ENCODE measurements at regions of chr5 and their contacts with region 1.

Region 1: DNA sequence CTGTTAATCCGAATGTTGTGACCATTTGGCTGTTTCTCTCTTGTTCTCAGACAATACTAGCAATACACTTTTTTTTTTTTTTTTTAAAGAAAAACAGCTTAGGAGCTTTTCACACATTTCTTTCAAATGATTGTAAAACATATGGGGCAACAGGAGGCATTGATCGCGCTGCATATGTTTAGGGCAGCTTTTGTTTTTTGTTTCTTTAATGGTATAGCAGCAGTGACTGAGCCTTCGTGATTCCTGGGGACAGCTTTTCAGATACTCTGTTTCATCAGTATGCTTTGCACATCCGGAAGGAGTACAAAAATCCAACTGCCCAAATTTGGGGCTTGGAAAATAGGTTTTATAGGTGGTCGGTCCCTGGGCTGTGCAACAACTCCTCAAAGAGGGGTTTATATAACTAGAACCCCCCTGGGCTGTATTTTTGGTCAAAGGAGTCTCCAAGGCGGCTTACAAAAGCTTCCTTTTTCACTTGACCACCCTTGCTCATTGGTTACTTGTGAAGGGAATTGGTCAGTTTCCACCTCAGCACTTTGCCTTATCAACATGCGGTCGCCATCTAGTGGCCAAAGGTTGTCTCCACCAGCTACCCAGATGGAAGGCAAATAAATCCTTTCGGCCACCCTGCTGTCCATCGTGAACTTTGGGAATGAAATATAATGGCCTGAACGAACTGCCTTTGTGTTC is 91.8 kb downstream of the PDE6A start:
- DNase-seq: peak; percentile 58
- H3K4me3 Mint-ChIP-seq: no peak overlapping the region
- H3K27ac Mint-ChIP-seq: no peak overlapping the region
- H3K4me1 Mint-ChIP-seq: peaks cover 5% of the 10 kb centered on the region
- H3K27me3 Mint-ChIP-seq: no peaks in the 10 kb centered on the region

Region 2: GRCh38 chr5:149636851-149637246 is 215.9 kb before region 1 on chr5:
- CTCF ChIA-PET with region 1: interaction called, 15 read pairs
- POLR2A ChIA-PET with region 1: no interaction called
- DNase-seq: peak; percentile 59
- H3K4me3 Mint-ChIP-seq: no peak overlapping the region
- H3K27ac Mint-ChIP-seq: no peak overlapping the region
- H3K4me1 Mint-ChIP-seq: peaks cover 16% of the 10 kb centered on the region
- H3K27me3 Mint-ChIP-seq: no peaks in the 10 kb centered on the region

Region 3: DNA sequence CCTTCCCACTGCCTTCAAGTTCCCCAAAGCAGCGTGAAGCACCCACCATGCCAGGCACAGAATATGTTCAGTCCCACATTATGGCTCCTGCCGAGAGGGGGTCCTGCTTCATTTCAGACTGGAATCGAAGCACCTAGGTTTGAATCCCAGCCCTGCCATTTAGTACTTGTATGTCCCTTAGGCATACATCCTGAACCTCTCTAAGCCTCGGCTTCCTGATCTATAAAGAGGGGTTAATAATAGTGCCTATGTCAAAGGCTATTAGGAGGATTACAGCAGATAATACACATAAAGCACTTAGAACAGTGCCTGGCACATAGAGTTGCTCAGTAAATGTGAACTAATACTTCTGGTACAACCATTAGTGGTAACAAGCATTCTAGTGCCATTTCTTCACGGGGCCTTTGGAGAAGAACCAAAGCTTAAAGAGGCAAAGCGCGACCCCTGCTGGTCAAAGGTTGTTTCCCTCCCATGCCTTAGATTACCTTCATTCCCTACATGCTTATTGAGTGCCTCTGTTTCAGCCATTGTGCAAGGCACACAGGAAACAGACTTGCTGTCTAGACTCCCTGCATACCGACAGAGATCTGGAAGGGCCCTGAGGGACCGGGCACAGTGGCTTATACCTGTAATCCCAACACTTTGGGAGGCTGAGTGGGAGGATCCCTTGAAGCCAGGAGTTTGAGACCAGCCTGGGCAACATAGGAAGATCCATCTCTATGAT is 24.5 kb before region 1 on chr5:
- CTCF ChIA-PET with region 1: interaction called, 35 read pairs
- POLR2A ChIA-PET with region 1: no interaction called
- DNase-seq: peak; percentile 85
- H3K4me3 Mint-ChIP-seq: no peak overlapping the region
- H3K27ac Mint-ChIP-seq: no peak overlapping the region
- H3K4me1 Mint-ChIP-seq: peaks cover 9% of the 10 kb centered on the region
- H3K27me3 Mint-ChIP-seq: no peaks in the 10 kb centered on the region

Region 4: GRCh38 chr5:149834246-149834855 is 18.4 kb before region 1 on chr5:
- CTCF ChIA-PET with region 1: interaction called, 35 read pairs
- POLR2A ChIA-PET with region 1: no interaction called
- DNase-seq: peak; percentile 64
- H3K4me3 Mint-ChIP-seq: no peak overlapping the region
- H3K27ac Mint-ChIP-seq: no peak overlapping the region
- H3K4me1 Mint-ChIP-seq: peaks cover 7% of the 10 kb centered on the region
- H3K27me3 Mint-ChIP-seq: no peaks in the 10 kb centered on the region

Region 5: GRCh38 chr5:149869411-149869821 is 16.6 kb after region 1 on chr5:
- CTCF ChIA-PET with region 1: interaction called, 62 read pairs
- POLR2A ChIA-PET with region 1: no interaction called
- DNase-seq: no peak
- H3K4me3 Mint-ChIP-seq: no peak overlapping the region
- H3K27ac Mint-ChIP-seq: no peak overlapping the region
- H3K4me1 Mint-ChIP-seq: no peaks in the 10 kb centered on the region
- H3K27me3 Mint-ChIP-seq: peaks cover 8% of the 10 kb centered on the region

Region 6: DNA sequence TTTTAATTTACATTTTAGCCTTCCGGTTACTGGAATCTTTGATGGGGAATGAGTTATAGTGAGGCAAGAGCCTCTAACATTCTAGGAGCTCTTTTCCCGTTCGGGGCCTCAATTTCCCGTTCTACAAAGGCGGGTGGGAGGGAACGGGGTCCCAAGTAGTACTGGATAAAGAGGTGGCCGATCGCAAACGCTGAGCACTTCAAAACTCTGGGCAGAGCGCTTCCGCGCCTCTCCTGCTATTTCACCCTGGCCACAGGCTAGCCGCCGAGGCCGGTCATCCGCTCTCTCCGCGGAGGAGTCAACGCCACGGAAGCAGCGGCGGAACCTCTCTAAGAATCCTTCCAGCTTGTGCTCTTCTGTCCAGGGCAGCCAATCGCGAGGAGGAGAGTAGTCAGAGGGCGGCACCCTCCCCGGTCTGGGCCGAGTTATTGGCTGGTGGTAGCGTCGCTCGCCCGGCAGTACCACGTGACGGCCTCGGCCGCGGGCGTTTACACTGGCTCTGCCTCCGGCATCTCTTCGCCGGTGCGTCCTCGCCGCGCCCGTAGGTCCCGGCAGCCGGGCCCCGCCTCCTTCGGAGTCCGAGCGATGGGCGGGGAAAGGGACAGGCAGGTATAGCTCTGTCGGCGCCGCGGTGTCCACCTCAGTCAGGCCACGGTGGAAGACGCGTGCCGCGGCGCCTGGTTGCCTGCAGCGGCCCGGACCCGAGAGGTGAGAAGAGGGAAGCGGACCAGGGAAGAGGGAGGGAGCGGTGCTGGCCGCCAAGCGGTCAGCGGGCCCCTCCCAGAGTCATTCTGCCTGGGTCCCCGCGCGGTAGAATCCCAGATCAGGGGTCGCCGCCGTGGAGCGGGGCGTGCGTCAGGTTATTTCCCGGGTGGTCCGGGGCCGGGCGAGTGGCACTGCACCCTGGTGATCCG is 107.7 kb after region 1 on chr5 and contains the start of gene SLC26A2:
- CTCF ChIA-PET with region 1: interaction called, 14 read pairs
- POLR2A ChIA-PET with region 1: no interaction called
- DNase-seq: peak; percentile 97
- H3K4me3 Mint-ChIP-seq: peak within 1 kb of the TSS; percentile 74
- H3K27ac Mint-ChIP-seq: peak within 1 kb of the TSS; percentile 86
- H3K4me1 Mint-ChIP-seq: peaks cover 36% of the 10 kb centered on the region
- H3K27me3 Mint-ChIP-seq: no peaks in the 10 kb centered on the region
- total RNA-seq, gene SLC26A2: 8.3 to 8.4 TPM

Region 7: DNA sequence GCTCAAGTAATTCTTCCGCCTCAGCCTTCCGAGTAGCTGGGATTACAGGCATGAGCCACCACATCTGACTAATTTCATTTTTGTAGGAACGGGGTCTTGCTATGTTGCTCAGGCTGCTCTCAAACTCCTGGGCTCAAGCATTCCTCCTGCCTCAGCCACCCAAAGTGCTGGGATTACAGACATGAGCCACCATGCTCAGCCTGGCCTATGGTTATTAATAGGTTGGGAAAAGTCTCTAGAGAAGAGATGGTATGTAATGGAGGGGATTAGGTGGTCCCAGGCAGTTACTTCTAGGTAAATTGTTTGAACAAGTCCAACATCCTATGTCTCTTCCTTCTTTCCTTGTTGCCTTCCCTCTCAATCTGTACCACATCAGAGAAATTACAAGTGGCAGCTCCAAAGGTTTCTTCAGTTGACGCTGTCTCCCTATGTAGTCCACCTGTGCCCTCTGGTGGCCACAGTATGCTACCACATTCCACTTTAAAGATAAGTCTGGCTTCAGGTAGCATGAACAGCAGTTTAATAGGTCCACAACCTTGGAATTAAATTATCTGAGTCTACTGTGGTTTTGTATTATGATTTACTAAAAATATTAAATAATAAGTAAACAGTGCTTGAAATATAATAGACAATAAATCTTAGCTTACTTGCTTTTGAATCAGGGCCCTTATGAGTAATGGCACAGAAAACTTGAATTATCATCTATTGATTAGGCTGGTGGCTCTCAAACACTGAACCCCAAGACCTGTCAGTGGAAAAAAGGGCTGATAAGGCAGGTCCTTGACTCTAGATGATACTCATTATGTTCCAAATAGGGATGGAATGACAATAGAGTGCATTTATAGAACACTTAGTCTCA is 138.0 kb after region 1 on chr5:
- CTCF ChIA-PET with region 1: interaction called, 10 read pairs
- POLR2A ChIA-PET with region 1: no interaction called
- DNase-seq: peak; percentile 75
- H3K4me3 Mint-ChIP-seq: no peak overlapping the region
- H3K27ac Mint-ChIP-seq: no peak overlapping the region
- H3K4me1 Mint-ChIP-seq: peaks cover 2% of the 10 kb centered on the region
- H3K27me3 Mint-ChIP-seq: no peaks in the 10 kb centered on the region